ENCODE measurements at regions of chr19 and their contacts with region 1.

Region 1: DNA sequence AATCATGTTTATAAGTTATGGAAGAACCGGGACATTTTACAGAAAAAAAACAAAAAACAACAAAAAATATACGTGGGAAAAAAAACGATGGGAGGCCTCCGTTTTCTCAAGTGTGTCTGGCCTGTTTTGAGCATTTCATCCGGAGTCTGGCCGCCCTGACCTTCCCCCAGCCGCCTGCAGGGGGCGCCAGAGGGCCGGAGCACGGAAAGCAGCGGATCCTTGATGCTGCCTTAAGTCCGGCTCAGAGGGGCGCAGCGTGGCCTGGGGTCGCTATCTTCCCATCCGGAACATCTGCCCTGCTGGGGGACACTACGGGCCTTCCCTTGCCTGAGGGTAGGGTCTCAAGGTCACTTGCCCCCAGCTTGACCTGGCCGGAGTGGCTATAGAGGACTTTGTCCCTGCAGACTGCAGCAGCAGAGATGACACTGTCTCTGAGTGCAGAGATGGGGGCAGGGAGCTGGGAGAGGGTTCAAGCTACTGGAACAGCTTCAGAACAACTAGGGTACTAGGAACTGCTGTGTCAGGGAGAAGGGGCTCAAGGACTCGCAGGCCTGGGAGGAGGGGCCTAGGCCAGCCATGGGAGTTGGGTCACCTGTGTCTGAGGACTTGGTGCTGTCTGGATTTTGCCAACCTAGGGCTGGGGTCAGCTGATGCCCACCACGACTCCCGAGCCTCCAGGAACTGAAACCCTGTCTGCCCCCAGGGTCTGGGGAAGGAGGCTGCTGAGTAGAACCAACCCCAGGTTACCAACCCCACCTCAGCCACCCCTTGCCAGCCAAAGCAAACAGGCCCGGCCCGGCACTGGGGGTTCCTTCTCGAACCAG is 1.8 kb upstream of the APOE start:
- H3K4me3 ChIP-seq: no peak overlapping the region
- H3K27ac ChIP-seq: no peak overlapping the region
- H3K4me1 ChIP-seq: peaks cover 6% of the 10 kb centered on the region; the same call in 1 of the 2 replicates
- CTCF ChIP-seq: peak; percentile 88

Region 2: GRCh38 chr19:44777715-44778347 is 126.0 kb before region 1 on chr19 and contains the start of gene CBLC:
- CTCF ChIA-PET with region 1: no interaction called
- POLR2A ChIA-PET with region 1: no interaction called
- H3K4me3 ChIP-seq: no peak within 1 kb of the TSS
- H3K27ac ChIP-seq: no peak within 1 kb of the TSS
- H3K4me1 ChIP-seq: 0 out of 2 replicates have a peak, but pooled peaks cover 4% of the 10 kb centered on the region
- CTCF ChIP-seq: no peak

Region 3: GRCh38 chr19:44890366-44891015 is 13.3 kb before region 1 on chr19:
- CTCF ChIA-PET with region 1: interaction called, 19 read pairs
- POLR2A ChIA-PET with region 1: interaction called, 10 read pairs
- H3K4me3 ChIP-seq: peak overlapping the region; percentile 42
- H3K27ac ChIP-seq: peak overlapping the region; percentile 70
- H3K4me1 ChIP-seq: peaks cover 6% of the 10 kb centered on the region
- CTCF ChIP-seq: no peak

Region 4: GRCh38 chr19:44948763-44949374 is 45.1 kb after region 1 on chr19:
- CTCF ChIA-PET with region 1: interaction called, 101 read pairs
- POLR2A ChIA-PET with region 1: interaction called, 7 read pairs
- H3K4me3 ChIP-seq: no peak overlapping the region
- H3K27ac ChIP-seq: no peak overlapping the region
- H3K4me1 ChIP-seq: 0 out of 2 replicates have a peak, but pooled peaks cover 1% of the 10 kb centered on the region
- CTCF ChIP-seq: no peak

Region 5: DNA sequence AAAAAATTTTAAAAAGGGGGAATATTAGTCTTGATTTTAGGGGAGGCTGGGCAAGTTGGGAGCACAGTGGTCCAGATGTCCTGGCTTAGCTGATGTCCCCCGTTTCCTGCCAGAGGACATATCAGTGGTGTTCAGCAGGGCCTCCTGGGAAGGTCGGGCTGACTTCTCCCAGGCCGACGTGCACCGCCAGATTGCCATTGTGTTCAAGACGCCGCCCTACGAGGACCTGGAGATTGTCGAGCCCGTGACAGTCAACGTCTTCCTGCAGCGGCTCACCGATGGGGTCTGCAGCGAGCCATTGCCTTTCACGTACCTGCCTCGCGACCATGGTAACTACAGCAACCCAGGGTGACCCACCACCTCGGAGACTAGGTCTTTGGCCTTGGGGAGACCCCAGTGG is 128.6 kb after region 1 on chr19:
- CTCF ChIA-PET with region 1: no interaction called
- POLR2A ChIA-PET with region 1: no interaction called
- H3K4me3 ChIP-seq: no peak overlapping the region
- H3K27ac ChIP-seq: no peak overlapping the region
- H3K4me1 ChIP-seq: no peaks in the 10 kb centered on the region
- CTCF ChIP-seq: no peak